ENCODE measurements at regions of chr5 and their contacts with region 1.

Region 1: GRCh38 chr5:15003511-15003920 is 131.9 kb upstream of the ANKH start:
- DNase-seq: peak; percentile 85
- H3K4me3 Mint-ChIP-seq: no peak overlapping the region
- H3K27ac Mint-ChIP-seq: no peak overlapping the region
- H3K4me1 Mint-ChIP-seq: peaks cover 8% of the 10 kb centered on the region
- H3K27me3 Mint-ChIP-seq: peaks cover 38% of the 10 kb centered on the region

Region 2: GRCh38 chr5:14685757-14686156 is 317.8 kb before region 1 on chr5:
- intact Hi-C with region 1: loop called (anchors 1 kb)
- DNase-seq: peak; percentile 83
- H3K4me3 Mint-ChIP-seq: no peak overlapping the region
- H3K27ac Mint-ChIP-seq: peak overlapping the region; percentile 42
- H3K4me1 Mint-ChIP-seq: peaks cover 15% of the 10 kb centered on the region
- H3K27me3 Mint-ChIP-seq: no peaks in the 10 kb centered on the region

Region 3: DNA sequence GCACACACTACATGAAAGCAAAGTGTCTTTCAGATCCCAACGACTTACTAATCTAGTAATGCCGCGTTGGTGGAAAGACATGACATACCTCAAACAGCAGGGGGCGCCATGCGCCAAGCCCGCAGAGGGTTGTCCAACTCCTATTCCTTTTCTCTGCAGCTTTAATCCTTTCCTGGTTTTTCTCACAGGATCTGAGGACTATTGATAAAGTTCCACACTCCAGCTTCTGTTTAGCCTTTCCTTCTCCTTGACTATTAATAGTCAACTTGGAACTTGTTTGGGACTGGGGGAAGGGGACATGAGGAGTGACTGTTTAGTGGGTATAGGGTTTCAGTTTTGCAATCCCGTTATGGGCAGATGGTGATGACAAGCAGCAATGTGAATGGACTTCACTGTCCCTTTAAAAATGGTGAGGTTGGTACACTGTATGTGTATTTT is 276.1 kb before region 1 on chr5:
- intact Hi-C with region 1: loop called (anchors 1 kb)
- DNase-seq: peak; percentile 92
- H3K4me3 Mint-ChIP-seq: no peak overlapping the region
- H3K27ac Mint-ChIP-seq: no peak overlapping the region
- H3K4me1 Mint-ChIP-seq: peaks cover 4% of the 10 kb centered on the region
- H3K27me3 Mint-ChIP-seq: no peaks in the 10 kb centered on the region

Region 4: GRCh38 chr5:14925326-14925725 is 78.2 kb before region 1 on chr5:
- intact Hi-C with region 1: loop called (anchors 5 kb)
- DNase-seq: no peak
- H3K4me3 Mint-ChIP-seq: peak overlapping the region; percentile 60
- H3K27ac Mint-ChIP-seq: peak overlapping the region; percentile 87
- H3K4me1 Mint-ChIP-seq: peaks cover 52% of the 10 kb centered on the region
- H3K27me3 Mint-ChIP-seq: no peaks in the 10 kb centered on the region

Measured in activated CD4-positive, alpha-beta T cell treated with anti-CD3 and anti-CD28 coated beads, Interleukin-2, amount 10 ng/mL, durations not matched to agents 24 days and 14 days (primary cell).